ENCODE measurements at regions of chr1 and their contacts with region 1.

Region 1: DNA sequence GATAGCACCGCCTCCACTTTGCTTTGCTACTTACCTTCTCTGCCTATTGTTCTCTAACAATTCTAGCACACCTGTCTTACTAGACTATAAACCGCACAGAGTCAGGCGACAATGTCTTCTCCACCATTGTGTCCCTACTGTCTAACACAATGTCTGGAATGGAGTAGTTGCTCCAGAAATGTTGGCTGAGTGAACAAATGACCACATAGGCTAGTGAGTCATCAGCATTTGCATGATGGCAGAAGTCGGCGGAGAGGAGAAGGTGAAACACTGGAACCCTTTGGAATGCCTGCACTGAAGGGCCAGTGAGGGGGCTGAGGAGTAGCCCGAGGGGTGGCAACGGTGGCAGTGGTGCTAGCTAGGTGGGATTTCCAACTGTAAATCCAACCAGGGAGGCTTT is 14.0 kb upstream of the PABPC4 start:
- DNase-seq: no peak
- ATAC-seq: no peak
- H3K4me3 ChIP-seq: no peak overlapping the region
- H3K27ac ChIP-seq: no peak overlapping the region
- H3K4me1 ChIP-seq: no peaks in the 10 kb centered on the region
- H3K27me3 ChIP-seq: no peaks in the 10 kb centered on the region
- CTCF ChIP-seq: no peak

Region 2: DNA sequence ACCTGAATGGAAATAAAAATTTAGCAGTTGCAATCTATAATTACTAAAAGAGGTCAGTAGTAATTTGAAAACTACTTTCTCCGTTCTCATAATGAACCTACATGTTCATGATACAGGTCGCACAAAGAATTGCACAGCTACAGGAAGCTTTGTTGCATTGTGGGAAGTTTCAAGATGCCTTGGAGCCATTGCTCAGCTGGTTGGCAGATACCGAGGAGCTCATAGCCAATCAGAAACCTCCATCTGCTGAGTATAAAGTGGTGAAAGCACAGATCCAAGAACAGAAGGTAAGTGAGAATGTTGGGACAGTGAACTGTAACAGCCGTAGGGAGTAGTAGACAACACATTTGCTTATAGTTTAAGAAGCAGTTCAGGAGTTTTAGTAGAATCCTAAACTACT is 167.9 kb before region 1 on chr1:
- intact Hi-C with region 1: no loop called
- DNase-seq: no peak
- ATAC-seq: no peak
- H3K4me3 ChIP-seq: no peak overlapping the region
- H3K27ac ChIP-seq: no peak overlapping the region
- H3K4me1 ChIP-seq: no peaks in the 10 kb centered on the region
- H3K27me3 ChIP-seq: no peaks in the 10 kb centered on the region
- CTCF ChIP-seq: no peak

Region 3: GRCh38 chr1:39434797-39435395 is 155.7 kb before region 1 on chr1:
- intact Hi-C with region 1: no loop called
- DNase-seq: no peak
- ATAC-seq: peak; percentile 72 to 94 (median 91)
- H3K4me3 ChIP-seq: no peak overlapping the region
- H3K27ac ChIP-seq: peak overlapping the region; percentile 10 to 64 (median 38)
- H3K4me1 ChIP-seq: peaks cover 0 to 17% (median 13%) of the 10 kb centered on the region in 3 donors
- H3K27me3 ChIP-seq: no peaks in the 10 kb centered on the region
- CTCF ChIP-seq: no peak

Region 4: DNA sequence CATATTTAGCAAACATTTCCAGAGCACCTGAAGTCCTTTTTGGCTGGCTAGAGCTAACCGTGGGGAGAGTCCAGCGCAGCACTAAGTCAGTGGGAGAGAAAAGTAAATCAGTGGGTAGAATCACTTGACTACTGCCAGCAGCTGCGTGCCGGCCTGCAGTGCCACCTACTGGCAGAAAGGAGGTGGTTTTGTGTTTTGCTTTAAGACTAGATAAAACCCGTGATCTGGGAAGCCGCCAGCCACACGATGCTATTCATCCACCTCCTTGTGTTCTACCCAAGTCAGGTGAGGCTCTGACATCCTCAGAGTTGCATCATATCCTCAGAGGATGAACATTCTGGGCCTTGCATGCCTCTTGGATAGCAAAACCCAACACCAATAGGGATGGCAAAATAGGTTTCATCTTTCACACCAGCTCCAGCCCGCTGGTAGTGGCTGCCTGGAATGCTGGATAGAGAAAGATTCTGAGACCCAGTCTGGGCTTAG is 63.0 kb after region 1 on chr1:
- intact Hi-C with region 1: loop called in 1 of 3 experiments (anchors 10 kb)
- DNase-seq: peak; percentile 65 to 85 (median 79)
- ATAC-seq: peak; percentile 73 to 88 (median 86)
- H3K4me3 ChIP-seq: no peak overlapping the region
- H3K27ac ChIP-seq: no peak overlapping the region
- H3K4me1 ChIP-seq: peaks cover 0 to 7% (median 4%) of the 10 kb centered on the region in 3 donors
- H3K27me3 ChIP-seq: no peaks in the 10 kb centered on the region
- CTCF ChIP-seq: peak; percentile 79 to 91 (median 85)

Measured in pancreas (tissue), 10 donors.